ENCODE measurements at regions of chr4 and their contacts with region 1.

Region 1: GRCh38 chr4:97500423-97500822 is 642.9 kb downstream of the STPG2 start:
- DNase-seq: no peak
- H3K4me3 ChIP-seq: no peak overlapping the region
- H3K27ac ChIP-seq: no peak overlapping the region
- H3K4me1 ChIP-seq: no peaks in the 10 kb centered on the region
- H3K27me3 ChIP-seq: no peaks in the 10 kb centered on the region
- CTCF ChIP-seq: no peak
- POLR2A ChIP-seq: no peak

Region 2: DNA sequence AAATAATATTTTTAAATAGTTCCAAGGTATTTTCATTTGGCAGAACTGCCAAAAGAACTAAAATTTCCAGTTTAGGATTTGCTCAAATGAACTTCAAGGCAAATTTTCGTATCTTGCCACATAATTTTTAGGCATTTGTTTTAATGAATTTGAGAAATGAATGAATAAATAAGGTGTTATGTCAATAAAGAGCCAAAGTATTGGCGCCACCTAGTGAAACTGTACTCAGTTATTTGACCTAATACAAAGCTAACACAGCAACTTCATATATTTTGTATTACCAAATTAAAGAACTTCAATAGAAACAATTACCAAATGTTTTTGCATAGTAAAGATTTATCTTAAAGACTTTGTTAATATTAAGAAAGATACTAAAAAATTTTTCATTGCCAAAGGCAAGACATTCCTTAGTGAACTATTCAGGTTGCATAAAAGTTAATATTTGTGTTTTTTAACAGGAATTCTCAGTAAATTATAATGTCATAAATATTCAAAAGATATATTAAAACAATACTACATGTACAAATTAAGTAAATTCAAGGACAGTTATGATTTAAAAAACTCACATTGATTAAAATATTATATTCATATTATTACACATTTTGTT is 592.5 kb after region 1 on chr4:
- intact Hi-C with region 1: loop called (anchors 10 kb)
- DNase-seq: no peak
- H3K4me3 ChIP-seq: no peak overlapping the region
- H3K27ac ChIP-seq: no peak overlapping the region
- H3K4me1 ChIP-seq: no peaks in the 10 kb centered on the region
- H3K27me3 ChIP-seq: no peaks in the 10 kb centered on the region
- CTCF ChIP-seq: peak in 3 of 6 experiments; percentile 30 to 64 (median 34)
- POLR2A ChIP-seq: no peak

Measured in thyroid gland (tissue), 4 donors.